ENCODE measurements at regions of chr17 and their contacts with region 1.

Region 1: DNA sequence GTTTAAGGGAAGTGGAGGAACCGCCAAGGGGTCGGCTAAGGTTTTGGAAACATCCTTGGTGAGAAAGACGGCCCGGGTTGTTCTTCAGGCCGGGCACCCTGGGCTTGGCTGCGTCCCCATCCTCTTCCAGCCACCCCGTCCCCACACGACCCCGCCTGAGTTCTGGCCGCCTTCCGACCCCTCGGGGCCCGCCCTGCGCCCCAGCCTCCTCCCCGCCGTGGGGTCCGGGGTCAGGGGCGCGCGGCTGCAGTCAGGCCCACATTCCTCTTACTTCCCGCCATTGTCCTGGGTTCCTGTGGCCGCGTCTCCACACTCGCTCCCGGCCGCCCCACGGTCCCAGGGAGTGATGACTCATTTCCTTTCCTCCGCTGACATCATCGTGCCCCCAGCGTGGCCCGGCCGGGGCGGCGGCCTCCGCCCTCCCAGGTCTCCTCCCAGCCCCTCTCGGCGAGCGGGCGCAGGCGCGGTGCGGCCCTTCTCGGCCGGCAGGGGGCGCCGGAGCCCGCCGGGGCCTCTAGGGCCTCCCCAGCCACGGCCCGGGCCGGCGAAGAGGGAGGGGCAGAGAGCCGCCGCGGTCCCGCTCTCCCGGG is 59.6 kb downstream of the WSB1 start:
- DNase-seq: peak; percentile 86
- H3K4me3 Mint-ChIP-seq: peak overlapping the region; percentile 82
- H3K27ac Mint-ChIP-seq: peak overlapping the region; percentile 95
- H3K4me1 Mint-ChIP-seq: peaks cover 45% of the 10 kb centered on the region
- H3K27me3 Mint-ChIP-seq: no peaks in the 10 kb centered on the region

Region 2: GRCh38 chr17:27293898-27294688 is 59.5 kb before region 1 on chr17 and contains the start of gene WSB1:
- intact Hi-C with region 1: loop called (anchors 1 kb)
- DNase-seq: peak; percentile 89
- H3K4me3 Mint-ChIP-seq: peak within 1 kb of the TSS; percentile 97
- H3K27ac Mint-ChIP-seq: peak within 1 kb of the TSS; percentile 98
- H3K4me1 Mint-ChIP-seq: peaks cover 37% of the 10 kb centered on the region
- H3K27me3 Mint-ChIP-seq: no peaks in the 10 kb centered on the region
- total RNA-seq, gene WSB1: 90.3 and 102 TPM in 2 replicates

Region 3: GRCh38 chr17:27332485-27333409 is 20.8 kb before region 1 on chr17:
- intact Hi-C with region 1: loop called (anchors 2 kb)
- DNase-seq: peak; percentile 81
- H3K4me3 Mint-ChIP-seq: peak overlapping the region; percentile 77
- H3K27ac Mint-ChIP-seq: peak overlapping the region; percentile 95
- H3K4me1 Mint-ChIP-seq: peaks cover 20% of the 10 kb centered on the region
- H3K27me3 Mint-ChIP-seq: peaks cover 3% of the 10 kb centered on the region

Region 4: GRCh38 chr17:27381007-27381501 is 27.5 kb after region 1 on chr17:
- intact Hi-C with region 1: loop called (anchors 2 kb)
- DNase-seq: peak; percentile 72
- H3K4me3 Mint-ChIP-seq: no peak overlapping the region
- H3K27ac Mint-ChIP-seq: no peak overlapping the region
- H3K4me1 Mint-ChIP-seq: peaks cover 7% of the 10 kb centered on the region
- H3K27me3 Mint-ChIP-seq: peaks cover 29% of the 10 kb centered on the region

Region 5: GRCh38 chr17:27403480-27404005 is 50.0 kb after region 1 on chr17:
- intact Hi-C with region 1: loop called (anchors 5 kb)
- DNase-seq: no peak
- H3K4me3 Mint-ChIP-seq: no peak overlapping the region
- H3K27ac Mint-ChIP-seq: no peak overlapping the region
- H3K4me1 Mint-ChIP-seq: no peaks in the 10 kb centered on the region
- H3K27me3 Mint-ChIP-seq: peaks cover 14% of the 10 kb centered on the region

Region 6: GRCh38 chr17:27473748-27474609 is 120.4 kb after region 1 on chr17:
- intact Hi-C with region 1: loop called (anchors 5 kb)
- DNase-seq: peak; percentile 83
- H3K4me3 Mint-ChIP-seq: peak overlapping the region; percentile 58
- H3K27ac Mint-ChIP-seq: peak overlapping the region; percentile 97
- H3K4me1 Mint-ChIP-seq: peaks cover 95% of the 10 kb centered on the region
- H3K27me3 Mint-ChIP-seq: no peaks in the 10 kb centered on the region

Region 7: DNA sequence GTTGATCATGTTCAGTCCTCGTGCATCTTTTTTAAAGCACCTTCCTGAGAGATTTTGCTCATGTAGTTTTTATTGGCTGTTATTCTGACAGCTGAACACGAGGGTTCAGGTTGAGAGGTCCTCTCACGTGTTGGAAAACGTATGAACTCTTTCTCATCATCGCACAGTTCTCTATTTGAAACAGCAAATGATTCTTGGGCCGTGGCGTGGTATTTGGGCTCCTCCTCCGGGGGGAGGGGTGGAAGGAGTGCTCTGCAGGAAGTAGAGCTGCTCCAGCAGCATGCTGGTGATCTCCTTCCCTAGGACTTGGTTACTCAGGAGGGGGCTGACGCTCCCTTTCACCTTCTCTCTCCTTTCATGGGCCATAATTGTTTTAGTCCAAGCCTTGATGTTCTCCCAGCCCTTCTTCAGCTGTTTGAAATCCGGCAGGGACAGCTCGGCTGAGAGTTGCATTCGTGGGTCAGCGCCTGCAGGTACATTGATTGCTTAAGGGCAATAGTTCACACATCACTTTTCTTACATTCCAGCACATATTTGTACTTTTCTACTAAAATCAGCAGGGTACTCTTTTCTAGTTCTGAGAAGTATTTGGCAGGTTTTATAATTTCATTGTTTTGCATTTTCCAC is 173.2 kb after region 1 on chr17:
- intact Hi-C with region 1: no loop called
- DNase-seq: peak; percentile 54
- H3K4me3 Mint-ChIP-seq: peak overlapping the region; percentile 68
- H3K27ac Mint-ChIP-seq: peak overlapping the region; percentile 76
- H3K4me1 Mint-ChIP-seq: peaks cover 94% of the 10 kb centered on the region
- H3K27me3 Mint-ChIP-seq: no peaks in the 10 kb centered on the region

Region 8: DNA sequence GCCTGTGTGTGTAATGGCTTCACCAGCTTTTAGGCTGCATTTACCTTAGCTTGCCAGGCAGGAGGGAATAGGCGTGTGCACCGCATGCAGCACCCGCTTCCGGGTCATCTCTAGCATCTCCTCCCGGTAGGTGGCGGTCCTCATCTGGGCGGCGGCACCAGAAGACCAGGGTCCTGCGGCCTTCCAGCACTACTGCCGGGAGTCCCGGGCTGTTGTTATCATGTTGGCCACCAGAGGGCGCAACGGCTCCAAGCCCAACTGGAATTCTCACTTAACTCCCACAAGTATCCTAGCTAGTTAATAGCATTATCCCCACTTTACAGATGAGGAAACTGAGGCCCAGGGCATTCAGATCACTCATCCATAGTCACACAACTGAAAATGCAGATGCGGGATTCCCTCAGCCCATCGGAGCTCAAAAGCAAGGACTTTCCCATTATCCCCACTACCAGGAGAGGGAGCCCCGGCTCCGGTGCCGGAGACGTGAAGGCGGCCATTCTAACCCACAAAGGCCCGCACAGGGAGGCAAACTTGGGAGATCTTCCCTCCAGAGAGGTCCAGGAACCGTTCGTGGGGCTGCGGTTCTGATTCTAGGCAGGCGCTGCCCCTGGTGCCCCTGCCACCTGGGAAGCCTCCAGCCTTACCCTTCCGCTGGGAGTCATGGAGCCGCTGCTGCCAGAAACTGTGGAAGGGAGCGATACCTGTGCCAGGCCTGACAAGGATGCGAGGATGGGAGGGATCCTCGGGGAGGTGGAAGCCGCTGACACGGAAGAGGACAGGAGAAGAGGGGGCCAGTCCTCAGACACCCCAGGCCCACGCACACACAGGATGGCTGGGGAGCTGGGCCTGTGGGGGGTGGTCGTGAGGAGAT is 301.3 kb after region 1 on chr17:
- intact Hi-C with region 1: loop called (anchors 1 kb)
- DNase-seq: peak; percentile 49
- H3K4me3 Mint-ChIP-seq: no peak overlapping the region
- H3K27ac Mint-ChIP-seq: no peak overlapping the region
- H3K4me1 Mint-ChIP-seq: peaks cover 13% of the 10 kb centered on the region
- H3K27me3 Mint-ChIP-seq: no peaks in the 10 kb centered on the region